Thyroid gland (tissue), 4 donors: ENCODE measurements at regions of chr17 and their contacts with region 1.

Region 1: DNA sequence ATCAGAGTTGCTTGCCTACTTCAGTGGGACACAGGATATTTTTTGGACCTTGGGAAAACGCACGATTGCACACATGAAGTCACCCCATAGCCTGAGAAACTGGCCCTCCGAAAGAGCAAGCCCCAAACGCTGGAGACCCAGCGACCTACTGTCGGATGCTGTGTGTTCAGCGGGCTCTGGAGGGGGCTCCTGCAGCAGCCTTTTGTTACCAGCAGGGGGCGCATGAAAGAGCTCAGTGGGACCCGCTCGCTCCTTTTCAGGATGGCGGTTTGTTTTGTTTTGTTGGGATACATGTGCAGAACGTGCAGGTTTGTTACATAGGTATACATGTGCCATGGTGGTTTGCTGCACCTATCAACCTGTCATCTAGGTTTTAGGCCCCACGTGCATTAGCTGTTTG is 28.4 kb downstream of the MYH3 start:
- DNase-seq: no peak
- H3K4me3 ChIP-seq: no peak overlapping the region
- H3K27ac ChIP-seq: no peak overlapping the region
- H3K4me1 ChIP-seq: no peaks in the 10 kb centered on the region
- H3K27me3 ChIP-seq: no peaks in the 10 kb centered on the region
- CTCF ChIP-seq: peak in 1 of 6 experiments; percentile 24
- POLR2A ChIP-seq: no peak

Region 2: GRCh38 chr17:9924735-9925191 is 704.0 kb before region 1 on chr17:
- intact Hi-C with region 1: loop called (anchors 10 kb)
- DNase-seq: peak; percentile 9 to 11
- H3K4me3 ChIP-seq: no peak overlapping the region
- H3K27ac ChIP-seq: no peak overlapping the region
- H3K4me1 ChIP-seq: no peaks in the 10 kb centered on the region
- H3K27me3 ChIP-seq: no peaks in the 10 kb centered on the region
- CTCF ChIP-seq: peak in 5 of 6 experiments; percentile 49 to 79 (median 70)
- POLR2A ChIP-seq: no peak

Region 3: GRCh38 chr17:10403589-10403988 is 225.2 kb before region 1 on chr17:
- intact Hi-C with region 1: no loop called
- DNase-seq: no peak
- H3K4me3 ChIP-seq: no peak overlapping the region
- H3K27ac ChIP-seq: no peak overlapping the region
- H3K4me1 ChIP-seq: no peaks in the 10 kb centered on the region
- H3K27me3 ChIP-seq: no peaks in the 10 kb centered on the region
- CTCF ChIP-seq: no peak
- POLR2A ChIP-seq: no peak